ENCODE measurements at regions of chr9 and their contacts with region 1.

Region 1: GRCh38 chr9:89929673-89930480 is 325.1 kb downstream of the GADD45G start:
- DNase-seq: no peak
- H3K4me3 ChIP-seq: no peak overlapping the region
- H3K27ac ChIP-seq: no peak overlapping the region; the same call in 1 of the 2 replicates
- H3K4me1 ChIP-seq: no peaks in the 10 kb centered on the region
- H3K27me3 ChIP-seq: no peaks in the 10 kb centered on the region; a peak in 1 of 7 replicates
- CTCF ChIP-seq: no peak
- EP300 ChIP-seq: no peak
- POLR2A ChIP-seq: no peak
- RAD21 ChIP-seq: no peak

Region 2: DNA sequence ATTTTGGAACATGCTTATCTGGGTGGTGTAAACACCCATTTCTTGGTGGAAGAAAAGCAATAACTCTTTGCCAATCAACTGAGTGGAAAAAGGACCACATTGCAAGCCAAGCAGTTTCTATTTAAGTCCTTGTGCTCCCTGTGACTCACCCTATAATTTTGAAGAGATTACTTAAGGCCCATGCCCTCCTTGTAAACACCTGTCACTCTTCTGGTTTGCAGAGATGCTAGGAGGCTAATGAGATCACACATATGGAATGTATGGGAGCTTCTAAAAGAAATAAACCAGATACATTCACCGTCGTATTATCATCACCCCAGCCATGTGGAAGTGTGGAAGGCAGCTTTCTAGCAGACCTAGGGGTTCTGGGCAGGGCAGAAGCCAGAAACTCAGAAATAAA is 12.0 kb after region 1 on chr9:
- CTCF ChIA-PET with region 1: interaction called, 10 read pairs
- POLR2A ChIA-PET with region 1: no interaction called
- DNase-seq: no peak
- H3K4me3 ChIP-seq: no peak overlapping the region
- H3K27ac ChIP-seq: no peak overlapping the region
- H3K4me1 ChIP-seq: no peaks in the 10 kb centered on the region
- H3K27me3 ChIP-seq: no peaks in the 10 kb centered on the region
- CTCF ChIP-seq: no peak
- EP300 ChIP-seq: no peak
- POLR2A ChIP-seq: no peak
- RAD21 ChIP-seq: no peak

Measured in H1 (cell line).